ENCODE measurements at regions of chr1 and their contacts with region 1.

Region 1: DNA sequence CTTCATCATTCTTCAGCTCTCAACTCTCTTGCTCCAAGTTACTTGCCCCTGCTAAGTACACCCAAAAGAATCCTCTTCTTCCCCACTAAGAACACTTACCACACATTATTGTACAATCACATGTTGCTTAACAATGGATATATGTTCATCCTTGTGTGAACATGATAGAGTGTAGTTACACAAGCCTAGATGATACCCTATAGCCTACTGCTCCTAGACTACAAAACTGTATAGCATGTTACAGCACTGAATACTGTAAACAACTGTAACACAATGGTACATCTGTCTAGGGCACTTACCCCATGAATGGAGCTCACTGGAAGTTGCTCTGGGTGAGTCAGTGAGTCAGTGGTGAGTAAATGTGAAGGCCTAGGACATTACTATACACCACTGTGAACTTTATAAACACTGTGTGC is 77.4 kb downstream of the RERE start:
- DNase-seq: peak; percentile 98
- ATAC-seq: peak; percentile 89
- H3K4me3 ChIP-seq: no peak overlapping the region
- H3K27ac ChIP-seq: peak overlapping the region; percentile 86
- H3K4me1 ChIP-seq: peaks cover 97% of the 10 kb centered on the region
- H3K27me3 ChIP-seq: no peaks in the 10 kb centered on the region
- CTCF ChIP-seq: no peak
- EP300 ChIP-seq: peak in 1 of 2 experiments; percentile 87; a peak in 2 of 4 replicates
- POLR2A ChIP-seq: no peak
- RAD21 ChIP-seq: no peak

Region 2: GRCh38 chr1:8702850-8703810 is 36.9 kb before region 1 on chr1:
- CTCF ChIA-PET with region 1: no interaction called
- POLR2A ChIA-PET with region 1: interaction called, 3 read pairs
- in situ Hi-C with region 1: no loop called
- intact Hi-C with region 1: loop called (anchors 5 kb)
- DNase-seq: peak; percentile 83
- ATAC-seq: peak; percentile 94
- H3K4me3 ChIP-seq: peak overlapping the region; percentile 76 to 89 (median 86)
- H3K27ac ChIP-seq: peak overlapping the region; percentile 83
- H3K4me1 ChIP-seq: peaks cover 74% of the 10 kb centered on the region
- H3K27me3 ChIP-seq: no peaks in the 10 kb centered on the region; a peak in 1 of 5 replicates
- CTCF ChIP-seq: peak; percentile 58
- EP300 ChIP-seq: peak in 1 of 2 experiments; percentile 56; a peak in 3 of 4 replicates
- POLR2A ChIP-seq: peak; percentile 80 to 82
- RAD21 ChIP-seq: peak; percentile 84

Region 3: DNA sequence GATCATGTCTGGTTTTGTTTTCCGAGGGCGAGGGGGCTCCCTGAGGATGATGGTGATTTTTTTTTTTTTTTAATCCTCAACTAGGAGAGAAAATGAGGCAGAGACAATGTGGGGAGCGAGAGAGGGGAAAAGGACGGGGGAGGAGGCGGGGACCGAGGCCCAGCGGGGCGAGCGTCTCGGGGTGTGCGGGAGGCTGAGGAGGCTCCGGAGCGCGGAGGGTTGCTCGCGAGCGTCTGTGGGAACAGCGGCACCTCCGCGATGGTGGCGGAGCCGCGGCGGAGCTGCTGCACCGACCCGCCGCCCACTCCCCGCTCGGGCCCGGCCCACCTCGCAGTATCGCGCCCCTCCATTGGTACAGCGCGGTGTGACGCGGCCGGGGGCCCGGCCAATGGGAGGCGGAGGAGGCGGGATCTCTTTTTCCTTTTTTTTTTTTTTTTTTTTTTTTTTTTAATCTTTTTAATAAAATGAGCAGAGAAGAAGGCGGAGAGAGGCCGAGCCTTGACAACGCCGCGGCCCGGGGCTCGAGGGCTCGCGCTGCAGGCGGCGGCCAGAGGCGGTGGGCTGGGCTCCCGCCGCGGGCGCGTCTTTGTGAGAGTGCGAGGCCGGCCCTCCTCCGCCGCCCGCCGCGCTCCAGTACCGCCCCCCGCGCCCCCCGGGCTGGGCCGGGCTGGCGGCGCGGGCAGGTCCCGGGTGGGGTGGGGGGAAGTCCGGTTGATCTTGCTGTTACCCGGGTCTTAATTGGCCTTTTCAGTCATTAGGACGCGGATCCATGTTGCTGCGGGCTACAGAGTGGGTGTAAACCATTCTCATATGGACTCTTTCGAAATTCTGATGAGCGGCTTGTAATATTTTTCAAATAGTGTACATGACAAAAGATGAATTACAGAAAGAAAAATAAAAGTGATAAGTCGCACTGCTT is 77.6 kb after region 1 on chr1 and contains the start of gene RERE:
- CTCF ChIA-PET with region 1: no interaction called
- POLR2A ChIA-PET with region 1: interaction called, 16 read pairs
- in situ Hi-C with region 1: no loop called
- intact Hi-C with region 1: loop called (anchors 5 kb)
- DNase-seq: peak; percentile 84
- ATAC-seq: peak; percentile 96
- H3K4me3 ChIP-seq: peak within 1 kb of the TSS; percentile 89 to 95 (median 91)
- H3K27ac ChIP-seq: peak within 1 kb of the TSS; percentile 88
- H3K4me1 ChIP-seq: peaks cover 52% of the 10 kb centered on the region
- H3K27me3 ChIP-seq: no peaks in the 10 kb centered on the region; a peak in 1 of 5 replicates
- CTCF ChIP-seq: peak; percentile 22; the same call in 1 of the 2 replicates
- EP300 ChIP-seq: no peak
- POLR2A ChIP-seq: peak; percentile 80 to 94
- RAD21 ChIP-seq: no peak
- total RNA-seq, gene RERE: 18.6 and 21.9 TPM in 2 replicates

Region 4: DNA sequence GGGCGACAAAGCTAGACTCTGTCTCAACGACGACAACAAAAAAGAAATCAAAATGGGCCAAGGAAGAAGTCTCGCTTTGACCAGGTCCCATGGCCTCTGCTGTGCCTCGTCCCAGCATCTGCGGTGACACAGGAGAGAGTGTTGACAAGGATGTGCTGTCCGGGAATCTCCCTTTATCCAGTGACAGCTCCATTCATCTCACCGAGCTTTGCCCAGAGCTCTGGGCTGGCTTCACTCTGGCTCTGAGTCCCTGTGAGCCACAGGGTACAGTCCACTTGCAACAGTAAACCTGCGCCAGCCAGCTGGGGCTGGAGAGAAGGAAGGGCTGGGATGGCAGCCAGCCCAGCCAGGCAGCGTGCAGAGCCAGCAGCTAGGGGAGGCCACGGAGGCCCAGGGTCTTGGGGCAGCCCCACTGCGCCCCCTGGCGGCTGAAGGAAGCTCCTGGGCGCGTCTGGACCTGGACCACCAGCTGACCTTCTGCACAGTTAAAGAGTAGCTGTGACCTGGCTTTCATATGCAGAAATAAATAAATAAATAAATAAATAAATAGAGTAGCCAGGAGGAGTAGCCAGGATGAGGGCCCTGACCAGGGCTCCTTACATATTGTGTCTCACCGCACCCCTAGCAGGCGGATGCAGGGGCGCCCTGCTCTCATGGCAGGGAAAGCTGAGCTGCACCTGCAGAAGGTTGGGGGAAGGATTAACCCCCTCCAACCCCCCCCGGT is 108.8 kb after region 1 on chr1:
- CTCF ChIA-PET with region 1: interaction called, 3 read pairs
- POLR2A ChIA-PET with region 1: interaction called, 11 read pairs
- in situ Hi-C with region 1: no loop called
- intact Hi-C with region 1: no loop called
- DNase-seq: peak; percentile 88
- ATAC-seq: peak; percentile 91
- H3K4me3 ChIP-seq: peak overlapping the region; percentile 6 to 58 (median 31); a peak in 5 of 6 replicates
- H3K27ac ChIP-seq: peak overlapping the region; percentile 39
- H3K4me1 ChIP-seq: peaks cover 67% of the 10 kb centered on the region
- H3K27me3 ChIP-seq: no peaks in the 10 kb centered on the region
- CTCF ChIP-seq: peak; percentile 94
- EP300 ChIP-seq: 0 out of 4 replicates have a peak, but pooled peaks of 1 of the 2 experiments have one; percentile 6
- POLR2A ChIP-seq: 0 out of 4 replicates have a peak, but pooled peaks of 1 of the 2 experiments have one; percentile 16
- RAD21 ChIP-seq: peak; percentile 98

Measured in HepG2 (cell line).